GM12878 (cell line): ENCODE measurements at regions of chr14 and their contacts with region 1.

Region 1: GRCh38 chr14:100383727-100384158 is 60.6 kb downstream of the SLC25A47 start:
- DNase-seq: no peak
- ATAC-seq: peak; percentile 97
- H3K4me3 ChIP-seq: no peak overlapping the region
- H3K27ac ChIP-seq: no peak overlapping the region
- H3K4me1 ChIP-seq: no peaks in the 10 kb centered on the region
- H3K27me3 ChIP-seq: no peaks in the 10 kb centered on the region
- CTCF ChIP-seq: peak; percentile 86 to 90 (median 87)
- EP300 ChIP-seq: no peak
- POLR2A ChIP-seq: no peak
- RAD21 ChIP-seq: peak; percentile 85

Region 2: DNA sequence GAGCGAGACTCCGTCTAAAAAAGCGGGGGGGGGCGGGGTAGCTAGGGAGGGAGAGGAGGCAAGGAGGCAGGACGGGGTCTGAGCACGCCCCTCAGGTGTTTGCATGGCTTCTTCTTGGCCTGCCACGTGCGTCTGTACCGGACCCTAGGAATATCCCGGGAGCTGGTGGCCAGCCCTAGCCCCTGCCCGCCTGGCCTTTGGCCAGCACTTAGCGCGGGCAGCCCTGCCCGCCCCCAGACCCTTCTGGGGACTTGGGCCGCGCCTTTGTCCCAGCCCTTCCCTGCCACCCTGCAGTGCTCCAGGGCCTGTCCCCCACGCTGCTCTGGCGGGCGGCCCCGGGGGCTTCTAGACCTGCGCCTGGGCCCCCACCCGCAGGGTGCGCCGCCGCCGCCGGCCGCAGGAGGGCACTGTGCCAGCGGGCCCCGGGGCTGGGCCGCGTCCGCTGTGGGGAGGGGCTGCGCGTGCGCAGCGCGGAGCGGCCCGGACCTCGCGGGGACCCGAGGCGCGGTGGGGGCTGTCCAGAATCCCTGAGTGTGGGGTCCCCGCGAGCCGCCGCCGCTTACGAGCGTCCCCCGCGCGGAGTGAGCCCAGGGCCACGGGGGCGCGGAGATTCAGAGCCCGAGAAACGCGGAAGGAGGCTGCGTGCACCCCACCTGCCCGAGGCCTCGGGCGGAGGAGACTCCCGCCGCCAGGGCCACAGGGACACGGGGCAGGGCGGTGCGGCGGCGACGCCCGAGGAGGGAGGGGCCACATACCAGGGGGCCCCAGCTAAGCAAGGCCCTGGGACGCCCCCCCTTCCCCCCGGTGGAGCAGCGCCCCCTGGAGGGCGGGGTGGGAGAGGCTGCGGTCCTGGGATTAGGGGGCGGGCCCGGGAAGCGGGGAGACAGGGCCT is 98.5 kb before region 1 on chr14:
- CTCF ChIA-PET with region 1: interaction called, 50 read pairs
- POLR2A ChIA-PET with region 1: no interaction called
- RAD21 ChIA-PET with region 1: interaction called, 4 read pairs
- SMC1A ChIA-PET with region 1: no interaction called
- in situ Hi-C with region 1: no loop called
- intact Hi-C with region 1: no loop called
- DNase-seq: no peak
- ATAC-seq: peak; percentile 96
- H3K4me3 ChIP-seq: peak overlapping the region; percentile 84
- H3K27ac ChIP-seq: peak overlapping the region; percentile 63
- H3K4me1 ChIP-seq: no peaks in the 10 kb centered on the region
- H3K27me3 ChIP-seq: no peaks in the 10 kb centered on the region
- CTCF ChIP-seq: peak; percentile 62 to 93 (median 80)
- EP300 ChIP-seq: no peak
- POLR2A ChIP-seq: peak; percentile 86
- RAD21 ChIP-seq: peak; percentile 67

Region 3: DNA sequence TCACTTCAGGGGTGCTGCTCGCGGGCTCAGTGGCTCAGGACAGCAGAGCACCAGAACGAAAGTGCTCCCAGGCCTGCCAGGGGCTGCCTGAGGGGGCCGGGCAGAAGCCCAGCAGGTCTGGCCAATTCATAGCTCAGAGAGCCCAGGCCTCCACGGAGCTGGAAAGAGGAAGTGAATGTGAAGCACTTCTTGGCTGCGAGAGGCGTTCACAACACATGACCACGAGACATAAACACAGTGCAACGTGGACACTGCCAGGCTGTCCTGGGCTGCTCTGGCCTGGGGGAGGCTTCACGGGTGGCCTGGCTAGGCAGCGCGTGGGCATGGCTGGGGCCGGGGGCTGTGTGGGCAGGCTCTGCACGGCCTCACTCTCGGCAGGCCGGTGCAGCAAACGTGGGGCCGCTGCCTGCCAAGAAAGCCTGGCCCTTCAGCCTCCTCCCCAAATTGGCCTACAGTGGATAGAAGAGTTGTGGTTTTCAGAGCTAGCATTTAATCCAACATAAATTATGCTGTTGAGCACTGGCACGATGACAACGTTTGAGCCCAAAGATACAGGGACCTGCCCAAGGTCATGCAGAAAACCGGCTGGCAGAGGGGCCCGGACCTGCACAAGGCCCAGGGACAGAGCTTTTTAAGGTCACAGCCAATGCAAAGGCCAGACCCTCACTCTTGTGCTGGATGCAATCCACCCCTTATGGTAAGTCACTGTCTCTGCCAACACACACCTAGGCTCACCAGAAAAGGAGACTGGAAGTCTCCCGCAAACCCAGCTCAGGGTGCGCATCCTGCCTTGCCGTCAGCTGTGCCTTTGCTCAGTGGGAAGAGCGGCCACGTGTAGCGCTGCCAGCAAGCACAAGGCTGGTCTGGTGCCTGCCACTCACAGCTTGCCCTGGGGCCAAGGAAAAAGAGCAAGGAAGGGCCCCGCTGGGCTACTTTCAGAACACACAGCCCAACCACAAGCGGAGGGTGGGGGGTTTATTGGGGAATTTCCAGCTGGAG is 86.1 kb before region 1 on chr14:
- CTCF ChIA-PET with region 1: interaction called, 11 read pairs
- POLR2A ChIA-PET with region 1: no interaction called
- RAD21 ChIA-PET with region 1: interaction called, 25 read pairs
- SMC1A ChIA-PET with region 1: interaction called, 5 read pairs
- in situ Hi-C with region 1: no loop called
- intact Hi-C with region 1: no loop called
- DNase-seq: peak; percentile 35
- ATAC-seq: peak; percentile 96
- H3K4me3 ChIP-seq: no peak overlapping the region
- H3K27ac ChIP-seq: no peak overlapping the region
- H3K4me1 ChIP-seq: peaks cover 16% of the 10 kb centered on the region
- H3K27me3 ChIP-seq: no peaks in the 10 kb centered on the region
- CTCF ChIP-seq: no peak
- EP300 ChIP-seq: no peak
- POLR2A ChIP-seq: 0 out of 2 replicates have a peak, but pooled peaks have one; percentile 19
- RAD21 ChIP-seq: no peak

Region 4: GRCh38 chr14:100398044-100398443 is 14.3 kb after region 1 on chr14:
- CTCF ChIA-PET with region 1: interaction called, 16 read pairs
- POLR2A ChIA-PET with region 1: no interaction called
- RAD21 ChIA-PET with region 1: interaction called, 4 read pairs
- SMC1A ChIA-PET with region 1: interaction called, 4 read pairs
- in situ Hi-C with region 1: no loop called
- intact Hi-C with region 1: no loop called
- DNase-seq: no peak
- ATAC-seq: no peak
- H3K4me3 ChIP-seq: no peak overlapping the region
- H3K27ac ChIP-seq: no peak overlapping the region
- H3K4me1 ChIP-seq: peaks cover 2% of the 10 kb centered on the region; the same call in 1 of the 2 replicates
- H3K27me3 ChIP-seq: no peaks in the 10 kb centered on the region
- CTCF ChIP-seq: no peak
- EP300 ChIP-seq: no peak
- POLR2A ChIP-seq: no peak
- RAD21 ChIP-seq: no peak

Region 5: DNA sequence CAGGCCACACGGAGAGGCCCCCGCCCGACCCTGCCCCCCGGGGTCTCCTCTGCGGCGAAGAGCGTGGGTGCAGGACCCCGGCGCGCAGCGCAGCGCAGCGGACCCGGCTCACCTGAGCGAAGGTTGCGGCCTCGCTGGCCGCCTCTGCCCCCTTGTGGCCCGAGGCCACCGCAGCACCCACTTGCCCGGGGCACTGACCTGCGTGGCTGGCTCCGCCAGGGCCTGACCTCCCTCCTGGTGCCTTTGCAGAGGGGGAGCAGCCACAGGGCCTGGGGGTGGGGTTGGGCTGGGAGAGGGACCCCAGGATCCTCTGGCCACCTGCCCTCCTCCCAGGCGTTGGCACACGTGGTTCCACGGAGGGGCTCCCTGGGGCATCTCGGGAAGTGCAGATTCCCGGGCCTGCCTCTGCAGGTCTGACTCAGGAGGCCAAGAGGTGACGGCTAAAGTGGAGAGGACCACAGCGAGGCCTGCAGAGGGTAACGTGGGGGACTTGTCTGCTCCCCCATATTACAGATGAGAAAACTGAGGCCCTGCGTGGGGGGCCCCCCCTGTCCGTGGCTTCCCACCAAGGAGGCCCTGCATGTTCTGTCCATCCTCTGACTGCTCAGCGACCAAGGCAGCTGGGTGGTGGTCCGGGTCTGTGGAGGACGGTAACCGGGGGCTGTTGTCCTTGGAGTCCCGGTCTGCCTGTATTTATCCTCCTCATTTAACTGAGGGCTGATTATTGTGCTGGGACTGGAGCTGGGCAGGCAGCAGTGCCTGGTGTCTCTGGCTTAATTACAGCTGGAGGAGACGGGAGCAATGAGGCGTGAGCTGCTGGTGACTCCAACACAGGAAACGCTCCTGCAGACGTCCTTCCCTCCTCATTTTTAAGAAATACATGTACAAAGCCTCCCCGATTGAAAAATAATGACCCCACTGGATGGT is 271.3 kb after region 1 on chr14:
- CTCF ChIA-PET with region 1: interaction called, 85 read pairs
- POLR2A ChIA-PET with region 1: no interaction called
- RAD21 ChIA-PET with region 1: interaction called, 31 read pairs
- SMC1A ChIA-PET with region 1: interaction called, 20 read pairs
- in situ Hi-C with region 1: no loop called
- intact Hi-C with region 1: no loop called
- DNase-seq: no peak
- ATAC-seq: peak; percentile 92
- H3K4me3 ChIP-seq: no peak overlapping the region
- H3K27ac ChIP-seq: no peak overlapping the region
- H3K4me1 ChIP-seq: peaks cover 8% of the 10 kb centered on the region; the same call in 1 of the 2 replicates
- H3K27me3 ChIP-seq: no peaks in the 10 kb centered on the region; a peak in 2 of 4 replicates
- CTCF ChIP-seq: peak; percentile 52 to 71 (median 54)
- EP300 ChIP-seq: no peak
- POLR2A ChIP-seq: no peak
- RAD21 ChIP-seq: peak; percentile 48

Region 6: DNA sequence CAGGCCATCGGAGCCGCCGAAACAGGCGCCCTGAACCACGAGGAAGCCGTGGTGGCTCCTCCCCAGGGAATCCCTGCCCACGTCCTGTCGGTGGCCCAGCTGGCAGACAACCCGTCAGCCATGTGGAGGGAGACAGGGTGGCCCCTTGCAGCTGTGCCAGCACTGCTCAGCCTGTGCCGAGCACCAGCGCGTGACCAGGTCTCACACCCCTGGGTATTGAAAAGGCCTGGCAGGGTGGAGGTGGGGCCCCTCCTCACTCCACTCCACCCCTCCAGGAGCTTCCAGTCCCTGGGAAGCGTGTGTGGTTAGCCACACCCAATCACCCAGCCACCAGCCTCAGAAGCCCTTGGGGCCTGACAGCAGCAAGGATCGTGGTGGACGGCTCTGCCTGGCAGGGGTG is 330.5 kb after region 1 on chr14:
- CTCF ChIA-PET with region 1: no interaction called
- POLR2A ChIA-PET with region 1: no interaction called
- RAD21 ChIA-PET with region 1: no interaction called
- SMC1A ChIA-PET with region 1: no interaction called
- in situ Hi-C with region 1: no loop called
- intact Hi-C with region 1: no loop called
- DNase-seq: no peak
- ATAC-seq: peak; percentile 36
- H3K4me3 ChIP-seq: no peak overlapping the region
- H3K27ac ChIP-seq: no peak overlapping the region
- H3K4me1 ChIP-seq: no peaks in the 10 kb centered on the region
- H3K27me3 ChIP-seq: peaks cover 0 to 9% of the 10 kb centered on the region in 2 experiments; a peak in 2 of 4 replicates
- CTCF ChIP-seq: no peak
- EP300 ChIP-seq: no peak
- POLR2A ChIP-seq: no peak
- RAD21 ChIP-seq: no peak

Region 7: GRCh38 chr14:101628471-101628966 is 1244.8 kb after region 1 on chr14:
- CTCF ChIA-PET with region 1: no interaction called
- POLR2A ChIA-PET with region 1: no interaction called
- RAD21 ChIA-PET with region 1: no interaction called
- SMC1A ChIA-PET with region 1: no interaction called
- in situ Hi-C with region 1: loop called (anchors 5 kb)
- intact Hi-C with region 1: loop called (anchors 10 kb)
- DNase-seq: no peak
- ATAC-seq: peak; percentile 96
- H3K4me3 ChIP-seq: no peak overlapping the region
- H3K27ac ChIP-seq: no peak overlapping the region
- H3K4me1 ChIP-seq: no peaks in the 10 kb centered on the region
- H3K27me3 ChIP-seq: no peaks in the 10 kb centered on the region; a peak in 2 of 4 replicates
- CTCF ChIP-seq: peak; percentile 90 to 95 (median 90)
- EP300 ChIP-seq: no peak
- POLR2A ChIP-seq: no peak
- RAD21 ChIP-seq: peak; percentile 76